Lower leg skin (tissue), 4 donors: ENCODE measurements at regions of chr20 and their contacts with region 1.

Region 1: DNA sequence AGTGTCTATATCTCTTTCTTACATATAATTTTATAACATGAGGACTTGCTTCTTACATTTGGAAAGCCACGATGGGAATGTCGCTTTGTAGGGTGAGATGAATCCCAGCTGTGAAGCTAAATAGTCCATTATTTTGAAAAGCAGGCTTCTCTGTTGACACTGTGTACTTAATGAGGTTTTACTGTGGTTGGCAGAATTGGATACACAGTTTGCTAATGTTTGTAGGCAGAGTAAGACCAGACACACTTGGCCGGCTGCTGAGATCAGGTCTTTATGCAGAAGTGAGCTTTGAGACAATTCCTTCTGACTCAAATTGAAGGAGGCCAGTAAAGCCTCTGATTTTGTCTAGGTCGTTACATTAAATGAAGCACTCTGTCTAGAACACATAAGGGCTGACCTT is 93.0 kb downstream of the NDUFAF5 start:
- DNase-seq: no peak
- H3K4me3 ChIP-seq: no peak overlapping the region
- CTCF ChIP-seq: no peak
- POLR2A ChIP-seq: no peak

Region 2: DNA sequence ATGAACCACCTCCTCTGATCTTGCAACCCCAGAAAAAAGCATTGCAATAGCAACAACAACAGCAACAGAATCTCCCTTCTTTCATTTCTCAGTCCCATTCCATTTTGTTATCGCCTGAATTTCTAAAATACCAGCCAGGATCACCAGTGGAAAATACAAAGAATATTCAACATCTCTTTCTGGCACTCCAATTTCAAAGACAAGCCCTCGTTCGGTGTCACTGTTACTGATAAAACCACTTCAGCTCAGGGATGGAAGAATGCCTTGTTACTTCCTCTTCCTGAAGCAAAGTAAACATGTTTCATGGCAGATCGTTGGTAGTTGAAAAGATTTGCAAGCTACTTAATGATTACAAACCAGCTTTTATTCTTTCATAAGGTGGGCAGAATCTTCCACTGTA is 963.0 kb before region 1 on chr20:
- intact Hi-C with region 1: loop called (anchors 5 kb)
- DNase-seq: no peak
- H3K4me3 ChIP-seq: no peak overlapping the region
- CTCF ChIP-seq: no peak
- POLR2A ChIP-seq: no peak

Region 3: GRCh38 chr20:13736436-13737191 is 141.2 kb before region 1 on chr20:
- intact Hi-C with region 1: no loop called
- DNase-seq: peak in 1 of 2 donors; percentile 38
- H3K4me3 ChIP-seq: no peak overlapping the region
- CTCF ChIP-seq: no peak
- POLR2A ChIP-seq: no peak

Region 4: DNA sequence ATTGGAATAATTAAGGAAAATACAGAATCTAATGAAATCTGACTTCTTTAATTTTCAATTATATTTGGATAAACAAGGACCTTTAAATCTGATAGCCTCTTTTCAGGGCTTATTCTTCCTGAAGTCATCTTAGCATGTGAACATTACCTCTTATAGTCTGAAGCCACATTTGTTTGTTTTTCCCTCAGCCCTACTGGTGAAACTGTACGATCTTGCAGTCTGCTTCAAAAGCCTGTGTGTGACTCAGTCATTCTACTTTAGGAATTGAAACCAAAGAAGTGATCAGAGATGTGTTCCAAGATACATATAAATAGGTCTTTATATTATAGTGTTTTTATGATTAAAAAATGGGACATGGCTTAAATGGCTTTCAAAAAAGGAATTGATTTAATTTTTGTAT is 185.0 kb after region 1 on chr20:
- intact Hi-C with region 1: no loop called
- DNase-seq: no peak
- H3K4me3 ChIP-seq: no peak overlapping the region
- CTCF ChIP-seq: no peak
- POLR2A ChIP-seq: no peak